ENCODE measurements at regions of chr22 and their contacts with region 1.

Region 1: DNA sequence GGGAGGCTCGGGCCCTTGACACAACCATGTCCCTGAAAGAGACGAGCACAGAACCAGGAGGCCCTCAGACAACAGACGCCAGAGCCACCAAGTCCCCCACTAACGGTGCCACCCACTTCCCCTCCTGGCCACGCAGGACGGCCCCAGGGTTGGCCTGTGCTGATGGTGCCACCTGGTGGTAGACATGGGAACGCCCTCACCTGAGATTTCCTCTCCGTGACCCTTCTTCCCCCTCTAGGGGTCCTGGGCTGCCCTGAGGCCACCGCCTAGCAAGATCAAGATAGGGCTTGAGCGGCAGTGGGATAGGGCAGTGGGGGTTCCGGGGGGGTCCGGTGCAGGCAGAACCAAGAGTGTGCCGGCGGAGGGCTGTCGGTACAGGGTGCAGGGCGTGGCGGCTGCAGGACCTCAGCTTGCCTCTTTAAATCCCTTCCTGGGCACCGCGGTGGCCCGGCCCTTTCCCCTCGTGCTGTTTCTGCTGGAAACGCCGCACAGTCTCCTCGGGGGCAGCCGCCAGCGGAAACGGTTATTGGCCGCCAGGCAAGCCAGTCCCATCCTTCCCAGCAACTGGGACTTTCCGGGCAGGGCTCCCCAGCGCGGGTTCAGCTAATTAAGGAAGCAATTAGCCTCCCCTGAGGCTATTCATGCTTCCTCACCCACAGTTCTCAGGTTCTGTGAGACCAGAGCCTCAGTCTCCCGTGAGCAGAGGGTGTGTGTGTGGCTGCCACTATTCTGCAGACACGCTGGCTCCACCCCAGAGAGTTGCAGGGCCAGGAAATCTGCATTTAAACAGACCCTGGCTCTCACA is 5.5 kb upstream of the NFAM1 start:
- DNase-seq: peak; percentile 41
- ATAC-seq: peak; percentile 86
- H3K4me3 ChIP-seq: no peak overlapping the region; a peak in 1 of 6 replicates
- H3K27ac ChIP-seq: no peak overlapping the region
- H3K4me1 ChIP-seq: peaks cover 8% of the 10 kb centered on the region; the same call in 1 of the 2 replicates
- H3K27me3 ChIP-seq: peaks cover under 1 to 59% of the 10 kb centered on the region in 2 experiments; a peak in 4 of 5 replicates
- CTCF ChIP-seq: peak; percentile 99
- EP300 ChIP-seq: no peak
- POLR2A ChIP-seq: no peak
- RAD21 ChIP-seq: peak; percentile 95

Region 2: GRCh38 chr22:41966607-41967240 is 471.0 kb before region 1 on chr22:
- CTCF ChIA-PET with region 1: no interaction called
- POLR2A ChIA-PET with region 1: no interaction called
- in situ Hi-C with region 1: loop called (anchors 25 kb)
- intact Hi-C with region 1: no loop called
- DNase-seq: peak; percentile 52
- ATAC-seq: peak; percentile 80
- H3K4me3 ChIP-seq: no peak overlapping the region
- H3K27ac ChIP-seq: no peak overlapping the region
- H3K4me1 ChIP-seq: peaks cover 11% of the 10 kb centered on the region; the same call in 1 of the 2 replicates
- H3K27me3 ChIP-seq: peaks cover 2 to 24% of the 10 kb centered on the region in 2 experiments; a peak in 4 of 5 replicates
- CTCF ChIP-seq: peak; percentile 78
- EP300 ChIP-seq: no peak
- POLR2A ChIP-seq: no peak
- RAD21 ChIP-seq: 0 out of 2 replicates have a peak, but pooled peaks have one; percentile 44

Region 3: DNA sequence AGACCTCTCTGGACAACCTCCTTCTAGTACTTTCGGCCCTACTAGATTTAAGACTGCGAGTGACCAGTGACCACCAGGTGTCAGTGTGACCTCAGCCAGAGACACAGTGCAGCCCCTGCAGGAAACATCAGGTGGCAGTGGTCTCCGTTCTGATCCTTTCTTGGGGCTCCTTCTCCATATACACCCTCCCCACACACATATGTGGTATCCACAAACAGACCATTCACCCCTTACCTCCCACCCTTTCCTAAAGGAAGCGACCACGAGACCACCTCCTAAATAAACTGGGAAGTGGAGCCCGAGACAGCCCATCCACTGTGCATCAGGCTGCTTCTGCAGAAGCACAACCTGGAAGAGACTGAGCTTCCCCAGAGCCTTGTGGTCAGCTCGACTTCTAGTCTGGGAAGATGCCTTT is 268.6 kb before region 1 on chr22:
- CTCF ChIA-PET with region 1: interaction called, 38 read pairs
- POLR2A ChIA-PET with region 1: no interaction called
- in situ Hi-C with region 1: loop called (anchors 5 kb)
- intact Hi-C with region 1: loop called (anchors 1 kb)
- DNase-seq: peak; percentile 71
- ATAC-seq: peak; percentile 85
- H3K4me3 ChIP-seq: no peak overlapping the region
- H3K27ac ChIP-seq: no peak overlapping the region
- H3K4me1 ChIP-seq: peaks cover 26% of the 10 kb centered on the region
- H3K27me3 ChIP-seq: no peaks in the 10 kb centered on the region
- CTCF ChIP-seq: peak; percentile 88
- EP300 ChIP-seq: no peak
- POLR2A ChIP-seq: no peak
- RAD21 ChIP-seq: peak; percentile 97

Region 4: GRCh38 chr22:42344361-42344905 is 93.3 kb before region 1 on chr22:
- CTCF ChIA-PET with region 1: no interaction called
- POLR2A ChIA-PET with region 1: no interaction called
- in situ Hi-C with region 1: no loop called
- intact Hi-C with region 1: no loop called
- DNase-seq: no peak
- ATAC-seq: peak; percentile 42
- H3K4me3 ChIP-seq: no peak overlapping the region; a peak in 1 of 6 replicates
- H3K27ac ChIP-seq: no peak overlapping the region
- H3K4me1 ChIP-seq: no peaks in the 10 kb centered on the region
- H3K27me3 ChIP-seq: peaks cover 6 to 43% of the 10 kb centered on the region in 2 experiments
- CTCF ChIP-seq: no peak
- EP300 ChIP-seq: no peak
- POLR2A ChIP-seq: no peak
- RAD21 ChIP-seq: no peak

Region 5: GRCh38 chr22:42369245-42370041 is 68.2 kb before region 1 on chr22:
- CTCF ChIA-PET with region 1: interaction called, 12 read pairs
- POLR2A ChIA-PET with region 1: interaction called, 3 read pairs
- in situ Hi-C with region 1: no loop called
- intact Hi-C with region 1: loop called (anchors 5 kb)
- DNase-seq: peak; percentile 94
- ATAC-seq: peak; percentile 96
- H3K4me3 ChIP-seq: peak overlapping the region; percentile 53 to 75 (median 66)
- H3K27ac ChIP-seq: no peak overlapping the region
- H3K4me1 ChIP-seq: peaks cover 22% of the 10 kb centered on the region
- H3K27me3 ChIP-seq: peaks cover 13 to 39% of the 10 kb centered on the region in 2 experiments; a peak in 4 of 5 replicates
- CTCF ChIP-seq: no peak
- EP300 ChIP-seq: no peak
- POLR2A ChIP-seq: peak; percentile 36 to 66; a peak in 3 of 4 replicates
- RAD21 ChIP-seq: no peak

Region 6: DNA sequence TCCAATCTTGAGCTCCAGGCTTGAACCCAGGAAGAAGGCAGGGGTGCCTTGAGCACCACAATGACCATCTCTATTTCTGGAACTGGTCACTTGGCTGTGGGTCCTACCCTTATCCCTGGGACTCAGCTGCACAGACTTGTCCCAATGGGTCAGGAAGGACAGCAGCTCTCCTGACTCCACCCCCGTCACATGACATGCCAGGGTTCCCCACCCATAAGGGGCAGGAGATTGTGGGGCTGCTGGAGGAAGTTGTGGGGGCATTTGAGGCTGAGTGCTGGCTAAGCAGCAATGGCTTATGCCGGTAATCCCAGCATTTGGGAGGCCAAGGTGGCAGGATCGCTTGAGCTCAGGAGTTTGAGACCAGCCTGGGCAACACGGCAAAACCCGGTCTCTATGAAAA is 61.7 kb before region 1 on chr22:
- CTCF ChIA-PET with region 1: interaction called, 12 read pairs
- POLR2A ChIA-PET with region 1: no interaction called
- in situ Hi-C with region 1: no loop called
- intact Hi-C with region 1: loop called (anchors 5 kb)
- DNase-seq: no peak
- ATAC-seq: no peak
- H3K4me3 ChIP-seq: no peak overlapping the region
- H3K27ac ChIP-seq: no peak overlapping the region
- H3K4me1 ChIP-seq: peaks cover 15% of the 10 kb centered on the region
- H3K27me3 ChIP-seq: peaks cover 0 to 20% of the 10 kb centered on the region in 2 experiments; a peak in 3 of 5 replicates
- CTCF ChIP-seq: no peak
- EP300 ChIP-seq: no peak
- POLR2A ChIP-seq: no peak
- RAD21 ChIP-seq: no peak

Region 7: GRCh38 chr22:42621505-42622002 is 183.9 kb after region 1 on chr22:
- CTCF ChIA-PET with region 1: no interaction called
- POLR2A ChIA-PET with region 1: no interaction called
- in situ Hi-C with region 1: no loop called
- intact Hi-C with region 1: no loop called
- DNase-seq: peak; percentile 47
- ATAC-seq: peak; percentile 85
- H3K4me3 ChIP-seq: no peak overlapping the region
- H3K27ac ChIP-seq: no peak overlapping the region
- H3K4me1 ChIP-seq: peaks cover 2% of the 10 kb centered on the region; the same call in 1 of the 2 replicates
- H3K27me3 ChIP-seq: no peaks in the 10 kb centered on the region
- CTCF ChIP-seq: peak; percentile 94
- EP300 ChIP-seq: no peak
- POLR2A ChIP-seq: no peak
- RAD21 ChIP-seq: peak; percentile 92